H1 (cell line): ENCODE measurements at regions of chr15 and their contacts with region 1.

Region 1: DNA sequence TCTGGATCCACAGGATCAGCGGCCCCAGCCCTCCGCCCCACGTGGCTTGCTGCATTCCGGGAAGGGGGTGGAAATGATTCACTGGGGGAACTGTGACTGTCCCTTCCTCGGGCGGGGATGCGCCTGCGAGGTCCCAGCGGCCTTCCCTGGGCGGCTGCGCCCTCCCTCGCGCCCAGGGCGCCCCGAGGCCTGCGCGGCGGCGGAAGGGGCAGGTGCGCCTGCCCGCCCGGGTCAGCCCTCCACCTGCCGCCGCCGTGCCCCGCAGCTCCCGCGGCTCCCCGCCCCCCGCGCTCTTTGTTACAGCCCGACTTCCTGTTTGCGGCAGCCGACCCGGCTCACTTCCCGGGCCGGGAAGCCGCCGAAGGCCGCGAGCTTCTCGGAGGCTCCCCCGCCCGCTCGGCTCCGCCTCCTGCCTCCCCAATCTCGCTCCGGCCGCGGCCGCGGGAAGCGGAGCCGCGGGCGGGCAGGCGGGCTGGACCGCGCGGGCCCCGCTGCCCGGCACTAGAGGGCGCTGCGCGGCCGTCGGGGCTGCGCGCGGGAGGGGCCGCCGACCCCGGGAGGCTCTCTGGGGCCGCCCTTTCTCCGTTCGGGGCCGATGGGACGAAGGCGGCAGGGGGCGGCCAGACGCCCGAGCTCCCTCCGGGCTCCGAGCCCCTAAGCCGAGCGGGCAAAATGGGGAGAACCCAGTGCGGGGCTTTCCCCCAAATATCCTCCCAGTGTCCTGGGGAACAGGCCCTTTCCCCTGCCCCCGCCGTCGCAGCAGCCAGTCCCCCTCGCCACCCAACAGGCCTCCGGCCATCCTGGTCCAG is 11.5 kb upstream of the CHAC1 start:
- DNase-seq: peak in 1 of 2 experiments; percentile 90
- H3K4me3 ChIP-seq: peak overlapping the region; percentile 30 to 64 (median 52)
- H3K27ac ChIP-seq: peak overlapping the region; percentile 58; the same call in 1 of the 2 replicates
- H3K4me1 ChIP-seq: peaks cover 0 to 28% (median 12%) of the 10 kb centered on the region in 4 experiments; a peak in 6 of 7 replicates
- H3K27me3 ChIP-seq: peaks cover 0 to 25% (median 16%) of the 10 kb centered on the region in 4 experiments; a peak in 6 of 7 replicates
- CTCF ChIP-seq: peak; percentile 71 to 80 (median 76)
- EP300 ChIP-seq: 0 out of 3 replicates have a peak, but pooled peaks of 1 of the 2 experiments have one; percentile 23
- POLR2A ChIP-seq: no peak
- RAD21 ChIP-seq: peak; percentile 36 to 71; a peak in 3 of 4 replicates

Region 2: DNA sequence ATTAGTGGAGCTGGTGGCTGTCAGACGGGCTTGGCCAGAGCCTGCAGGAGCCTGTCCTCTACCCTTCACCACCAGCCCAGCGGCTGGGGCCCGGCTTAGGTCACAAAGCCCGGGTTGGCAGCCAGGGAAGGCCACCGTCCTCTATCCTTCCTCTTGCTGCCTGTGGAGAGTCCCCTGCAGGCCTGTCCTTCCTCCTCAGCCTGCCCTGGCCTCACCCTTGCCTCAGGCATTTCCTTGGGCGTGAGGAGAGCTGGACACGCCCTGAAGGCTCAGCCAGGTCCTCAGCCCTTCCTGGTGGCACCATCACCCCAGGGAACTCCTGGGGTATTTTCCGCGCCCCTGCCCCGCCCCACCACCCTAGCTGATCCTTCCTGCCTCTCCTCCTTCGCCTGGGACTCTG is 19.2 kb after region 1 on chr15:
- CTCF ChIA-PET with region 1: interaction called, 52 read pairs
- POLR2A ChIA-PET with region 1: interaction called, 1,505 read pairs
- DNase-seq: no peak
- H3K4me3 ChIP-seq: no peak overlapping the region
- H3K27ac ChIP-seq: no peak overlapping the region
- H3K4me1 ChIP-seq: no peaks in the 10 kb centered on the region; a peak in 5 of 7 replicates
- H3K27me3 ChIP-seq: no peaks in the 10 kb centered on the region
- CTCF ChIP-seq: no peak
- EP300 ChIP-seq: no peak
- POLR2A ChIP-seq: no peak
- RAD21 ChIP-seq: no peak

Region 3: DNA sequence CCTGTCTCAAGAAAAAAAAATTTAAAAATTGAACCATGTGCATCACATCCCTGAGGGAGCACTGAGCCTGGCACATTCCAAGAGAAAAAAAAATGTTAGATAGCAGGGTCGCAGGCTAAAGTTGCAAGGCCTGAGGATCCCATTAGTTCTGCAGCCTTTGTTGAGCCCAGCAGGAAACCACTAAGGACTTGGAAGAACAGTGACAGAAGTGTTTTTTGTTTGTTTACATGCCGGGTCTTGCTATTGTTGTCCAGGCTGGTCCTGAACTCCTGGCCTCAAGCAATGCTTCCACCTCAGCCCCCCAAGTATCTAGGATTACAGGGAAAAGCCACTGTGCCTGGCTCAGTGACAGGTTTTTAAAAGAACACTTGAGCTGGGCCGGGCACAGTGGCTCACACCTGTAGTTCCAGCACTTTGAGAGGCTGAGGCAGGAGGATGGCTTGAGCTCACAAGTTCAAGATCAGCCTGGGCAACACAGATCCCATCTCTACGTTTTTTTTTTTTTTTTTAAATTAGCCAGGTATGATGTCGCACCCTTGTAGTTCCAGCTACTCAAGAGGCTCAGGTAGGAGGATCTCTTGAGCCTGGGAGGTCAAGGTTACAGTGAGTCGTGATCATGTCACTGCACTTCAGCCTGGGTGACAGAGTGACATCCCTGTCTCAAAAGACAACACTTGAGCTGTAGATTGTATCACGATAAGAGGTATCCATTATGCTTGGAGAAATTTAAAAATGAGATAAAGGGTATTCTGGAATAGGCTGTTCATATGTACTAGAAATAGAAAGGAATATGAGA is 26.8 kb after region 1 on chr15:
- CTCF ChIA-PET with region 1: interaction called, 52 read pairs
- POLR2A ChIA-PET with region 1: interaction called, 1,505 read pairs
- DNase-seq: no peak
- H3K4me3 ChIP-seq: no peak overlapping the region
- H3K27ac ChIP-seq: no peak overlapping the region
- H3K4me1 ChIP-seq: peaks cover 0 to 7% (median 4%) of the 10 kb centered on the region in 4 experiments; a peak in 3 of 7 replicates
- H3K27me3 ChIP-seq: no peaks in the 10 kb centered on the region
- CTCF ChIP-seq: no peak
- EP300 ChIP-seq: no peak
- POLR2A ChIP-seq: no peak
- RAD21 ChIP-seq: no peak

Region 4: DNA sequence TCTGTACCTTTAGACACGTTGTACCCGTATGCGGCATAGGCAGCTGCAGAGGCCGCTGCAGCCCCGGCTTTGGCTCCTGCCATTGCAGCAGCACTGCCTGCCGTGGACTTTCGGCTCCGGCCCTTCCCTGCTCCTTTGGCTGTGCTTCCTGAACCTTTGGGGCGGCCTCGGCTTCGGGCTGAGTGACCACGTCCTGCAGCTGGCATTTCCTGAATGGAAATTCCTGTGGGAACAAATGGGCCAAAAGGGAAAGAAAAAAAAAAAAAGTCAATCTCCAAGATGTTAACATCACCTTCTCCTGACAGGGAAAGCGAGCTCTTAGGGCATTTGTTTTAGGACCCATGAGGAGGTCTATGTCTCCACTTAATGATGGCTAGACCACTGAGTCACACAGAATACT is 41.1 kb after region 1 on chr15:
- CTCF ChIA-PET with region 1: interaction called, 14 read pairs
- POLR2A ChIA-PET with region 1: no interaction called
- DNase-seq: no peak
- H3K4me3 ChIP-seq: no peak overlapping the region
- H3K27ac ChIP-seq: no peak overlapping the region
- H3K4me1 ChIP-seq: no peaks in the 10 kb centered on the region
- H3K27me3 ChIP-seq: no peaks in the 10 kb centered on the region
- CTCF ChIP-seq: no peak
- EP300 ChIP-seq: no peak
- POLR2A ChIP-seq: no peak
- RAD21 ChIP-seq: no peak

Region 5: DNA sequence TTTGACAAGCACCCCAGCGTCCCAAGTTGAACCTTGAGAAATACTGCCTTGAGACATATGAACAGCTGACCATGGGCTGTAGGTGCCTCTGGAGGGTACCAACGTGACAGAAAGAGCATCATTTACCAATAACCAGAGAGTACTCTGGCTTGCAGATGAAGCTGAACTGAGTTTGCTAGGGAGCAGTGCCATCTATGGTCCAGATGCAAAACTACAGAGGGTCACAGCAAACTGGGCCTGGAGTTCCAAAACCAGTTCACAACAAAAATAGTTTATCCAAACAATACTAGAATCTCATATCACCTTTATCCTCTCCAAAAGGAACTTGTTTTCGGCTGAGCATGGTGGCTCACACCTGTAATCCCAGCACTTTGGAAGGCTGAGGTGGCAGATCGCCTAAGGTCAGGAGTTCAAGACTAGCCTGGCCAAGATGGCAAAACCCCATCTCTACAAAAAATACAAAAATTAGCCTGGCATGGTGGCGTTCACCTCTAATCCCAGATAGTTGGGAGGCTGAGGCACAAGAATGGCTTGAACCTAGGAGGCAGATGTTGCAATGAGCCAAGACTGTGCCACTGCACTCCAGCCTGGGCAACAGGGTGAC is 80.9 kb after region 1 on chr15:
- CTCF ChIA-PET with region 1: interaction called, 52 read pairs
- POLR2A ChIA-PET with region 1: interaction called, 6 read pairs
- DNase-seq: peak in 1 of 2 experiments; percentile 58
- H3K4me3 ChIP-seq: no peak overlapping the region
- H3K27ac ChIP-seq: no peak overlapping the region
- H3K4me1 ChIP-seq: no peaks in the 10 kb centered on the region
- H3K27me3 ChIP-seq: no peaks in the 10 kb centered on the region
- CTCF ChIP-seq: peak; percentile 54 to 82 (median 82)
- EP300 ChIP-seq: no peak
- POLR2A ChIP-seq: no peak
- RAD21 ChIP-seq: peak; percentile 88